GM12878 (cell line): ENCODE measurements at regions of chr21 and their contacts with region 1.

Region 1: GRCh38 chr21:33441489-33442477 is 38.0 kb downstream of the TMEM50B start:
- DNase-seq: peak; percentile 91
- ATAC-seq: peak; percentile 87
- H3K4me3 ChIP-seq: no peak overlapping the region
- H3K27ac ChIP-seq: peak overlapping the region; percentile 90
- H3K4me1 ChIP-seq: peaks cover 19% of the 10 kb centered on the region
- H3K27me3 ChIP-seq: no peaks in the 10 kb centered on the region
- CTCF ChIP-seq: no peak
- EP300 ChIP-seq: no peak; a peak in 1 of 4 replicates
- POLR2A ChIP-seq: no peak; the same call in 1 of the 2 replicates
- RAD21 ChIP-seq: no peak

Region 2: GRCh38 chr21:32929633-32930038 is 512.1 kb before region 1 on chr21:
- CTCF ChIA-PET with region 1: no interaction called
- POLR2A ChIA-PET with region 1: no interaction called
- RAD21 ChIA-PET with region 1: no interaction called
- SMC1A ChIA-PET with region 1: no interaction called
- in situ Hi-C with region 1: loop called (anchors 10 kb)
- intact Hi-C with region 1: no loop called
- DNase-seq: peak; percentile 69
- ATAC-seq: peak; percentile 79
- H3K4me3 ChIP-seq: no peak overlapping the region; the same call in 1 of the 2 replicates
- H3K27ac ChIP-seq: peak overlapping the region; percentile 73
- H3K4me1 ChIP-seq: peaks cover 31% of the 10 kb centered on the region
- H3K27me3 ChIP-seq: no peaks in the 10 kb centered on the region
- CTCF ChIP-seq: no peak
- EP300 ChIP-seq: peak; percentile 33 to 36; a peak in 2 of 4 replicates
- POLR2A ChIP-seq: no peak
- RAD21 ChIP-seq: no peak

Region 3: DNA sequence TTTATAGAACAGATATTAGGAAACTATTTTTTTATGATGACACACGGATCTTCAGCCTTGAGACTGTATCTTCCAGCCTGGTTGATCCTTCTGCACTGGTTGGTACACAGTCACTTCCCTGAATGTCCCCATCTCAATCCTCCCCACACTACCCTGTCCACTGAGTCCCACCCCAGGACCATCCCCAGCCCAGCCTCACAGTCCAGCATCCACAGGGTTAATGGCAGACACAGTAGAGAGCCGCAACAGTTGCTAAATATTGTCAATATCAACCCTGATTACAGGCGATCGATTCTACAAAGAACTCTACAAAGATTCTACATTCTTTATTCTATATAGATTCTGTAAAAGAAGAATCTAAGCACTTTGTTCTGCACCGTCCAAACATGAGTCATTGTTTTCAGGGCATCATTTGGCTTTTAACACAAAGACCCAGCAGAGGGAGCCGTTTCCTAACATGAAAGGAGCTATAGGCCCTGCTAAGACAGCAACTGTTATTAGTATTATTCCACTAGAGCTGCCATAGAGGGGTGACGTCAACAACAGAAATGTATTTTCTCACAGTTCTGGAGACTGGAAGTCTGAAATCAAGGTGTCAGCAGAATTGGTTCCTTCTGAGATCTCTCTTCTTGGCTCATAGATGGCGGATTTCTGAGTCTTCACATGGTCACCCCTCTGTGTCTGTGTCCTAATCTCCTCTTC is 242.1 kb before region 1 on chr21:
- CTCF ChIA-PET with region 1: interaction called, 319 read pairs
- POLR2A ChIA-PET with region 1: interaction called, 14 read pairs
- RAD21 ChIA-PET with region 1: interaction called, 63 read pairs
- SMC1A ChIA-PET with region 1: interaction called, 62 read pairs
- in situ Hi-C with region 1: loop called (anchors 5 kb)
- intact Hi-C with region 1: loop called (anchors 1 kb)
- DNase-seq: peak; percentile 73
- ATAC-seq: peak; percentile 76
- H3K4me3 ChIP-seq: no peak overlapping the region
- H3K27ac ChIP-seq: no peak overlapping the region
- H3K4me1 ChIP-seq: peaks cover 14% of the 10 kb centered on the region
- H3K27me3 ChIP-seq: no peaks in the 10 kb centered on the region; a peak in 1 of 4 replicates
- CTCF ChIP-seq: peak; percentile 74 to 90 (median 75)
- EP300 ChIP-seq: no peak
- POLR2A ChIP-seq: no peak
- RAD21 ChIP-seq: peak; percentile 96

Region 4: DNA sequence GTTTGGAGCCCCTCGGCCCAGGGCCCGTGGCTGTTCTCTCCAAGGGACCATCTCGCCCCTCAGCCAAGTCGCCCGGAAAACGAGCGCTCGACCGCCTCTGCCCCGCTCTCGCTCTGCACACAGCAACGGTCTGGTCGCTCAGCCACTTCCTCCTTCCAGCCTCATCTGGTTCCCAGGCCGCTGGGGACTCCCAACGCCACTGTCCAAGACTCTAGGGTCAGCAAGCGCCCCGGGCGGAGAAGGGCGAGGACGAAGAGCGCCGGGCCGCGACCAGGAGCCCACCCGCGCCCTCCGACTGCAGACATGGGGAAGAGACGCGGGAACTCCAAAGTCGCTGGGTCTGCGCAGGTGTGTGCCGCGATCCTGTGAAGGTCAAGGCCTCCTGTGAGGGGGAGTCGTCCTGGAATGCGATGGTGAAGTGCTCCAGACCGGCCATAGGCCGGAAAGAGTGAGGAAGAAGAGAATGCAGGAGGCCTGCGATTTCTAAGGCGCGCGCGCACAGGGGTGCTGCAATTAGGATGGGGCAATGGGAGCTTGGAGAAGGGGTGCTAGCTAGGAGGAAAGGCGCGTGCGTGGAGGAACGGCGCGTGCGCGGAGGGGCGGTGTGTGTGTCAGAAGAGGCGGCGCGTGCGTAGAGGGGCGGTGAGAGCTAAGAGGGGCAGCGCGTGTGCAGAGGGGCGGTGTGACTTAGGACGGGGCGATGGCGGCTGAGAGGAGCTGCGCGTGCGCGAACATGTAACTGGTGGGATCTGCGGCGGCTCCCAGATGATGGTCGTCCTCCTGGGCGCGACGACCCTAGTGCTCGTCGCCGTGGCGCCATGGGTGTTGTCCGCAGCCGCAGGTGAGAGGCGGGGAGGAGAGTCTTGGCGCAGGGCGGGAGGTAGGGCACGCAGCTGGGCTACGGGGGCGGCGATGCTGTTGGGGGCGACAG is 117.2 kb before region 1 on chr21 and contains the start of gene IFNAR1:
- CTCF ChIA-PET with region 1: interaction called, 18 read pairs
- POLR2A ChIA-PET with region 1: interaction called, 3 read pairs
- RAD21 ChIA-PET with region 1: interaction called, 17 read pairs
- SMC1A ChIA-PET with region 1: interaction called, 18 read pairs
- in situ Hi-C with region 1: no loop called
- intact Hi-C with region 1: no loop called
- DNase-seq: peak; percentile 91
- ATAC-seq: peak; percentile 91
- H3K4me3 ChIP-seq: peak within 1 kb of the TSS; percentile 85
- H3K27ac ChIP-seq: peak within 1 kb of the TSS; percentile 97
- H3K4me1 ChIP-seq: peaks cover 4% of the 10 kb centered on the region; the same call in 1 of the 2 replicates
- H3K27me3 ChIP-seq: no peaks in the 10 kb centered on the region
- CTCF ChIP-seq: no peak
- EP300 ChIP-seq: no peak
- POLR2A ChIP-seq: peak; percentile 93
- RAD21 ChIP-seq: no peak
- polyA plus RNA-seq, gene IFNAR1: 25.6 to 30.9 TPM

Region 5: DNA sequence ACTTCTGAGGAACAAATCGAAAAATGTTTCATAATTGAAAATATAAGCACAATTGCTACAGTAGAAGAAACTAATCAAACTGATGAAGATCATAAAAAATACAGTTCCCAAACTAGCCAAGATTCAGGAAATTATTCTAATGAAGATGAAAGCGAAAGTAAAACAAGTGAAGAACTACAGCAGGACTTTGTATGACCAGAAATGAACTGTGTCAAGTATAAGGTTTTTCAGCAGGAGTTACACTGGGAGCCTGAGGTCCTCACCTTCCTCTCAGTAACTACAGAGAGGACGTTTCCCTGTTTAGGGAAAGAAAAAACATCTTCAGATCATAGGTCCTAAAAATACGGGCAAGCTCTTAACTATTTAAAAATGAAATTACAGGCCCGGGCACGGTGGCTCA is 86.4 kb before region 1 on chr21:
- CTCF ChIA-PET with region 1: interaction called, 182 read pairs
- POLR2A ChIA-PET with region 1: interaction called, 5 read pairs
- RAD21 ChIA-PET with region 1: interaction called, 128 read pairs
- SMC1A ChIA-PET with region 1: interaction called, 133 read pairs
- in situ Hi-C with region 1: no loop called
- intact Hi-C with region 1: no loop called
- DNase-seq: no peak
- ATAC-seq: no peak
- H3K4me3 ChIP-seq: no peak overlapping the region
- H3K27ac ChIP-seq: no peak overlapping the region
- H3K4me1 ChIP-seq: no peaks in the 10 kb centered on the region
- H3K27me3 ChIP-seq: no peaks in the 10 kb centered on the region
- CTCF ChIP-seq: no peak
- EP300 ChIP-seq: no peak
- POLR2A ChIP-seq: no peak
- RAD21 ChIP-seq: no peak

Region 6: GRCh38 chr21:33380483-33380998 is 61.2 kb before region 1 on chr21:
- CTCF ChIA-PET with region 1: interaction called, 24 read pairs
- POLR2A ChIA-PET with region 1: interaction called, 6 read pairs
- RAD21 ChIA-PET with region 1: interaction called, 148 read pairs
- SMC1A ChIA-PET with region 1: interaction called, 36 read pairs
- in situ Hi-C with region 1: no loop called
- intact Hi-C with region 1: loop called (anchors 1 kb)
- DNase-seq: peak; percentile 95
- ATAC-seq: peak; percentile 70
- H3K4me3 ChIP-seq: no peak overlapping the region; the same call in 1 of the 2 replicates
- H3K27ac ChIP-seq: peak overlapping the region; percentile 95
- H3K4me1 ChIP-seq: peaks cover 54% of the 10 kb centered on the region
- H3K27me3 ChIP-seq: no peaks in the 10 kb centered on the region
- CTCF ChIP-seq: no peak
- EP300 ChIP-seq: peak; percentile 30 to 48; a peak in 2 of 4 replicates
- POLR2A ChIP-seq: peak; percentile 69; the same call in 1 of the 2 replicates
- RAD21 ChIP-seq: no peak

Region 7: GRCh38 chr21:33608559-33608958 is 166.8 kb after region 1 on chr21:
- CTCF ChIA-PET with region 1: interaction called, 18 read pairs
- POLR2A ChIA-PET with region 1: no interaction called
- RAD21 ChIA-PET with region 1: interaction called, 15 read pairs
- SMC1A ChIA-PET with region 1: interaction called, 17 read pairs
- in situ Hi-C with region 1: no loop called
- intact Hi-C with region 1: no loop called
- DNase-seq: no peak
- ATAC-seq: no peak
- H3K4me3 ChIP-seq: no peak overlapping the region
- H3K27ac ChIP-seq: no peak overlapping the region
- H3K4me1 ChIP-seq: no peaks in the 10 kb centered on the region
- H3K27me3 ChIP-seq: no peaks in the 10 kb centered on the region
- CTCF ChIP-seq: no peak
- EP300 ChIP-seq: no peak
- POLR2A ChIP-seq: no peak
- RAD21 ChIP-seq: no peak